ENCODE measurements at regions of chr2 and their contacts with region 1.

Region 1: GRCh38 chr2:43131024-43131889 is 95.1 kb downstream of the ZFP36L2 start:
- DNase-seq: peak; percentile 91
- H3K4me3 Mint-ChIP-seq: peak overlapping the region; percentile 11
- H3K27ac Mint-ChIP-seq: peak overlapping the region; percentile 89
- H3K4me1 Mint-ChIP-seq: peaks cover 88% of the 10 kb centered on the region
- H3K27me3 Mint-ChIP-seq: no peaks in the 10 kb centered on the region

Region 2: DNA sequence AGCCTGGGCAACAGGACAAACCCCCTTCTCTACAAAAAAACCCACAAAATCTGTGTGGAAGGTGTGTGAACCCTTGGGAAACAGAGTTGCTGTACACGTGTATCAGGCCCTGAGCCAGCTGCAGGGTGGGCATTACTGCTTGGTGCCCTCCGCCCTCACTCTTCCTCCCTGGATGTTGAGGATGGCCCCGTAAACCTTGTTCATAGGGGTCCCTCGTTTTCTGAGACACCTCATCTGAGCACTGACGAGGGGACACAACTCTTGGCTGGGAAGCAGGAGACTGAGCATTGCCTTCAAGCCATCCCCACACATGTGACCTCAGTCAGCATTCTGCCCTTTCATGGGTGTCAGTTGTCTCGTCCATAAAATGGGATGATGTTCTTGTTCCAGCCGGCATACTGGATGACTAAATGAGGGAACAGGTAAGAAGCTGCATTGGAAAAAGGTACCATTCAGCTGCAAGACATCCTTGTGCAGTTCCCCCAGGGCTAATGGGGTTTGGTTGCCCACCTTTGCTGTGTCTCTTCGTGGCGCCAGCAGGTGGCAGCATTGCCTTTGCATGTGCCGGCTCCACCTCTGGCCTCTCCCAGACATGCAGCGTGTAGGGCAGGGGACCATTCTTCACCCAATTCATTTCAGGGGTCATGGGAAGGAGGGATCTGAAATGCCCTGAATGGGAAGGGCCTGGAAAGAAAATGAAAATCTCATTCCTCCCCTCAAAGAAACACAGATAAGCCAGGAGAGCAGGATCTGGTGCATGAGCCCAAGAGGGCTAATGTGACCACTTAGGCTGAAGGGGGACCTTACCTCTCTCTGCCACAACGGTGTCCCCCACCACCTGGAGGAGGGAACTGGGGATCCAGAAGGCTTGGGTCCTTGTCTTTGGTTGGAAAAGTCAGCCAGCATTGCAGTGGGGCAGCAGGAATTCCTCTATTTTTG is 302.5 kb before region 1 on chr2:
- CTCF ChIA-PET with region 1: interaction called, 11 read pairs
- POLR2A ChIA-PET with region 1: no interaction called
- intact Hi-C with region 1: no loop called
- DNase-seq: peak; percentile 78
- H3K4me3 Mint-ChIP-seq: no peak overlapping the region
- H3K27ac Mint-ChIP-seq: no peak overlapping the region
- H3K4me1 Mint-ChIP-seq: peaks cover 14% of the 10 kb centered on the region
- H3K27me3 Mint-ChIP-seq: peaks cover 2% of the 10 kb centered on the region

Region 3: GRCh38 chr2:43059183-43059897 is 71.9 kb before region 1 on chr2:
- CTCF ChIA-PET with region 1: no interaction called
- POLR2A ChIA-PET with region 1: interaction called, 5 read pairs
- intact Hi-C with region 1: loop called (anchors 2 kb)
- DNase-seq: peak; percentile 82
- H3K4me3 Mint-ChIP-seq: peak overlapping the region; percentile 22
- H3K27ac Mint-ChIP-seq: peak overlapping the region; percentile 76
- H3K4me1 Mint-ChIP-seq: peaks cover 19% of the 10 kb centered on the region
- H3K27me3 Mint-ChIP-seq: no peaks in the 10 kb centered on the region

Region 4: GRCh38 chr2:43178602-43179542 is 47.6 kb after region 1 on chr2:
- CTCF ChIA-PET with region 1: interaction called, 10 read pairs
- POLR2A ChIA-PET with region 1: interaction called, 11 read pairs
- intact Hi-C with region 1: loop called (anchors 1 kb)
- DNase-seq: peak; percentile 61
- H3K4me3 Mint-ChIP-seq: peak overlapping the region; percentile 29
- H3K27ac Mint-ChIP-seq: peak overlapping the region; percentile 87
- H3K4me1 Mint-ChIP-seq: peaks cover 69% of the 10 kb centered on the region
- H3K27me3 Mint-ChIP-seq: no peaks in the 10 kb centered on the region

Region 5: DNA sequence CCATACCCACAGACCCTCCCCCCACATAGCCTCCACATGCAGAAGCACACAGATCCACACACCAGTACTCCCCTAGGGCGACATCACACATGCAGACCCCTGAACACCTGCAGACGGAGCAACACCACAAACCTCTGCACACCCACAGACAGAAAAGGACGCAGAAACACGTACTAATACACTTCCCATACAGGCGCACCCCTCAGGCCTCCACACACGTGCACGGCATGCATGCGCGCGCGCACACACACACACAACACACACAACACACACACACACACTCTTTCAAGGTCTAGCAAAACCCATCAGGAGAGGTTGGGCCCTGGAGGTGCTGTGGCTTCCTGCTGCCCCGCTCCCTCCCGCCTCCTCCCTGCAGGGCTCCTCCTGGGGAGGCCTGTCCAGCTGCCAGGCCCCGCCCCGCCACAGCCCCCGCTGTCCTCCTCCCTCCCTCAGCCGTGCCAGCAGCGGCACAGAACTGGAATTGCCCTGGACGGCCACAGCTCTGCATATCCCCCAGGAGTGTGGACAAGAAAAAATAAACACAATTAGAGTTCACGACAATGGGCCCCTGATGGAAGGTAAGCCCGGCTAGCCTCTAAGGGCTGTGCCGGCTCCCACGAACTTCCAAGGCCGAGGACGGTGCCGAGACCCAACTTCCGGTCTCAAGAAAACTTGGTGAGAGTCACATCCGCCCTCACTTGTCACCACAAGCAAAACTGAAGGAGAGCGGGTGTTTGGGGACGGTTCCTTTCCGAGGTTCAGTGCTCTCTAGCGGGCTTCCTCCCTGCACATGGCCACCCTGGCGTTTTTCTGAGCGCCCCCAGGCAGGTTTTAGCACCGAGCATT is 88.3 kb after region 1 on chr2:
- CTCF ChIA-PET with region 1: interaction called, 254 read pairs
- POLR2A ChIA-PET with region 1: interaction called, 283 read pairs
- intact Hi-C with region 1: no loop called
- DNase-seq: peak; percentile 89
- H3K4me3 Mint-ChIP-seq: peak overlapping the region; percentile 88
- H3K27ac Mint-ChIP-seq: peak overlapping the region; percentile 95
- H3K4me1 Mint-ChIP-seq: peaks cover 42% of the 10 kb centered on the region
- H3K27me3 Mint-ChIP-seq: no peaks in the 10 kb centered on the region

Region 6: GRCh38 chr2:43426305-43427031 is 295.2 kb after region 1 on chr2:
- CTCF ChIA-PET with region 1: interaction called, 3 read pairs
- POLR2A ChIA-PET with region 1: no interaction called
- intact Hi-C with region 1: loop called (anchors 2 kb)
- DNase-seq: peak; percentile 83
- H3K4me3 Mint-ChIP-seq: no peak overlapping the region
- H3K27ac Mint-ChIP-seq: peak overlapping the region; percentile 19
- H3K4me1 Mint-ChIP-seq: peaks cover 37% of the 10 kb centered on the region
- H3K27me3 Mint-ChIP-seq: no peaks in the 10 kb centered on the region

Region 7: GRCh38 chr2:43595603-43596412 is 464.6 kb after region 1 on chr2 and contains the start of gene THADA:
- CTCF ChIA-PET with region 1: no interaction called
- POLR2A ChIA-PET with region 1: no interaction called
- intact Hi-C with region 1: loop called (anchors 2 kb)
- DNase-seq: peak; percentile 99
- H3K4me3 Mint-ChIP-seq: peak within 1 kb of the TSS; percentile 98
- H3K27ac Mint-ChIP-seq: peak within 1 kb of the TSS; percentile 95
- H3K4me1 Mint-ChIP-seq: peaks cover 28% of the 10 kb centered on the region
- H3K27me3 Mint-ChIP-seq: no peaks in the 10 kb centered on the region
- total RNA-seq, gene THADA: 39.0 to 46.6 TPM

Measured in activated CD4-positive, alpha-beta memory T cell treated with anti-CD3 and anti-CD28 coated beads for 36 hours (primary cell).